Common myeloid progenitor, CD34-positive (primary cell): ENCODE measurements at regions of chr1 and their contacts with region 1.

Region 1: GRCh38 chr1:224513787-224514209 is 79.2 kb upstream of the WDR26 start:
- DNase-seq: peak; percentile 63 to 83 (median 79)
- H3K4me3 ChIP-seq: no peak overlapping the region
- H3K27ac ChIP-seq: no peak overlapping the region
- H3K4me1 ChIP-seq: peaks cover 0 to 18% (median 6%) of the 10 kb centered on the region in 4 experiments
- H3K27me3 ChIP-seq: no peaks in the 10 kb centered on the region

Region 2: DNA sequence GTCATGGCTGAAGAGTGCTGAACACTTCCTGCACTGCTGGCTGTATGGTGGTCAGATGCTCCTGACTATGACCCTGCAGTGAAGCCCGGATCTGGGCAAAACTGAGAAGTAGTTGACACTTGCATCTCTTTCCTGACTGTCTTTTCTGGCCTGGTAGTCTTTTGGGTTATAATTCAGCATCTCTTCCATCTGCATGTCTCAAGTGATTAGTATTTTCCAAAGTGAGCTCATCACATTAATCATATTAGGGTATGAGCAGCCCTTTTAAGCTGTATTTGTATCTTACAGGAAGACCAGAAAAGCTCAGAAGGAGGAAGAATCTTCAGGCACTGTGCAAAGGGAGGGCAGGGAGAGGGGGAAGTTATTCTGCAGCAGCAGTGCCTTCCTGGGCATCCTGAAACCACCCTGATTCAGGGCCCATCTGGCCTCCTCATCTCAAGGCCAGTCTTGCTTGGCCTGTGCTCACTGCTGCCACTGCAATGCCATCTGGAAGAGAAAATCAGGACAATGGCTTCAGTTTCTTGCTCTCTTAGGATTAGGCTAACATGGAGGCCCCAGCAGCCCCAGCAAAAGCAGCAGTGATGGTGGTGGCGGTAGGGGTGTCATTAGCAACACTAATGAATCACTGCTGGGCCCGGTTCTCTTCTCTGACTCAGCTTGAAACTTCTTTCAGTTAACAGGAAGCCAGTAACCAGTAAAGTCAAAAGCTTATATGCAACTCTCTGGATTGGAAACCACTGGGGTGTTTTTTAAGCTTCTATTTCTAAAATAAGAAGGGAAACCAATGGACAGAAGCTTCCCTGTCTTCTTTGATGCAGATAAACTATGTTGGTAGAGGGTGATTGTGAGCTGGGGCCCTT is 15.9 kb before region 1 on chr1:
- CTCF ChIA-PET with region 1: interaction called, 12 read pairs
- POLR2A ChIA-PET with region 1: no interaction called
- DNase-seq: peak; percentile 56 to 91 (median 87)
- H3K4me3 ChIP-seq: peak overlapping the region in 3 of 7 experiments; percentile 29 to 41 (median 29)
- H3K27ac ChIP-seq: peak overlapping the region in 1 of 2 experiments; percentile 43
- H3K4me1 ChIP-seq: peaks cover 4 to 50% (median 29%) of the 10 kb centered on the region in 4 experiments
- H3K27me3 ChIP-seq: no peaks in the 10 kb centered on the region

Region 3: DNA sequence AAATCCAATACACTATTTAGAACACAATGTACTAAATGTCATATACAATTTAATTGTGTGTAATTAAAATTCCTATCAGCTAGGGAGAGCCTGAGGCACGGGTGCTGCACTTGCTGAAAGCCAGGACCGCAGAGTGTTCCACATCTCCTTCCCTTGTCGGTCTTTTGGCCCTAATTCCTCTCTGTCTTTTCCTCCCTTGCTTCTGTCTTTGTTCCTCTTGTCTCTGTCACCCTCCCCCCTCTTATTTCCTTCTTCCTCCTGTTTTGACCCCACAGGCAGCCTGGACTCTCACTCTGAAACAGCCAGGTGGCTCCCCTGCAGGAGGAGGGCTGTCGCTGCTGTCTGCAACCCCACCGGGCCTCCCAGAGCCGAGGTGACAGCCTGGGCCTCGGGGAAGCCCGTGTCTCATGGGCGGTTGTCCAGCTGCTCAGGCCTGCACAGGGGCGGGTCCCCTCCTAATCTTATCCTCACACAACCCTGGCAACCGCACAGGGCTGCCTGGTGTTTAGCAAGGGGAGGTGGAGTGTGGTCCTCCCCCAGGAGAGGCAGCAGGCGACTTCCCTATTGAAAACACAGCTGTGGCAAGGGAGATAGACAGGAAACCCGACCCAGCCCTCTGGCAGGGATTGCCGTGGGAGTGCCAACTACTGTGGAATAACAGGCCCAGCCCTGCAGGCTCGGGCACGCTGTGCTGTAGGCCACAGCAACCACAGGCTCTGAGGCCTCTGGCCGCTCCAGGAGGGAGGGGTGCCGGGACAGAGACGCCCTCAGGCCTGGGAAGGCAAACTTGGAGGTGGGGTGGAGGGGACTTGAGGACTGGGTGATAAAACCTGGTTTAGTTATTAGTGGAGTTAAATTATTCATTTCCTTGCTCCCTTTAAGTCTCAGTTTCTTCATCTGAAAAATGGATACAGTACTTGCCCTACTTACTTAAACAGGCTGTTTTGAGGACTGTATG is 10.4 kb before region 1 on chr1:
- CTCF ChIA-PET with region 1: interaction called, 12 read pairs
- POLR2A ChIA-PET with region 1: no interaction called
- DNase-seq: peak; percentile 81 to 96 (median 93)
- H3K4me3 ChIP-seq: peak overlapping the region in 4 of 7 experiments; percentile 19 to 54 (median 33)
- H3K27ac ChIP-seq: peak overlapping the region in 1 of 2 experiments; percentile 62
- H3K4me1 ChIP-seq: peaks cover 3 to 61% (median 32%) of the 10 kb centered on the region in 4 experiments
- H3K27me3 ChIP-seq: no peaks in the 10 kb centered on the region

Region 4: DNA sequence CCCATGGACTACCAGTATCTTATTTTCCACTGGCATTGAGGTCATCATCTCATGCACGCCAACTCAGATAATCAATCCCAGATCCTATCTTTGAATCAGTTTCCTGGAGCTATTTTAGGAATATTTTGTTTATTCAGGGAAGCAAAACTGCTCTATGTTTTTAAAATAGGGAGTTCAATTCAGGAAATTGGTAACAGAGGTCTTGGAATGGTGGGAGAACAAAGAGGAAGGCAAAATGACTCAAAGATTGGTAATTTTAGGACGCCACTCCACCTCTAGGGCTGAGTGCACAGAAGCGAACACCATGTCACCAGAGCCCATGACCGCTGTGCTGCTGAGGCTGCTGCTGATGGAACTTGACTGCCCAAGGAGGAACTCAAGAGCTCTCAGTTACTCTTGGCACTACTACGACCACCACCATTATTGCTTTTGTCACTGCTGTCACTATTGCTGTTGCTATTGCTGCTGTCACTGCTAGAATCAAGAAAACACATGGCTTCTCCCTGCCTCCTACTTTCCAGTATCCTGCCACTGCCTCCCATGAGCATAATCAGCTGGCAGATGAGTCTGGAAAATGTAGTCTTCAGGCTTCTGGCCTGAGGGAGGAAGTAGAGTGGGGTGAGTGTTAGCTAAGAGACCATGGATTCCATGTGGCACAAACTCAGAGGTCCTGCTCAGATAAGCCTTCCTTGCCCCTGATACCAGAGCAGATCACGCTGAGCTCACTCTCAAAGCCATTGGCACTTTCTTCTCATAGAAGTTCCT is 30.7 kb after region 1 on chr1:
- CTCF ChIA-PET with region 1: interaction called, 10 read pairs
- POLR2A ChIA-PET with region 1: no interaction called
- DNase-seq: no peak
- H3K4me3 ChIP-seq: no peak overlapping the region
- H3K27ac ChIP-seq: no peak overlapping the region
- H3K4me1 ChIP-seq: peaks cover 7 to 28% (median 25%) of the 10 kb centered on the region in 4 experiments
- H3K27me3 ChIP-seq: no peaks in the 10 kb centered on the region

Region 5: DNA sequence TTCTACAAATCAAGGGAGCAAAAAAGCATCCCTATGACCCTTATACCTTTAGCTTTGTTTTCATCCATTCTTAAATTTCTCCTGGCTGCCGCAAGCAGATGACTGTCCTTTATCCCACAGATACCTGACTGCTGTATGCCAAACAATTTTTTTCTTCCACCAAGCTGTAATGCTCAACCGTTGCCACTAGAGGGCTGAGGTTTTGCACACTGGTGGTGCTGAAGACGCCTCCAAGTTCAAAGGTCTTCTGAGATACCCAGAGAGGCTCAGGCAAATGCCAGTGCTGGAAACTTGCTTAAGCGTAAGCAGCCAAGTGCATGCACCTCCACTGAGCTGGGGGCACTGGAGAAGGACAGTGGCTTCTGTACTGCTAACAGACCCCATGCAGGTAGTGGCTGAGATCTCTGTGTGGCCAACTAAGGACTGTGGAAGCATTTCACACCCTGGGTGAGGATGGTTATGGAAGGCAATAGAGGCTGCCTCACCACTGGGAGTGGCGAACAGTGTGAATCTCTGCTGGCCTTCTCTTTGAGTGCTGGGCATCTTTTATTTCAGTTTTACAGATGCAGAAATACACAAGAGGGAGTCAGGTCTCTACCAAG is 130.9 kb after region 1 on chr1:
- CTCF ChIA-PET with region 1: interaction called, 17 read pairs
- POLR2A ChIA-PET with region 1: no interaction called
- DNase-seq: peak; percentile 48 to 71 (median 58)
- H3K4me3 ChIP-seq: no peak overlapping the region
- H3K27ac ChIP-seq: no peak overlapping the region
- H3K4me1 ChIP-seq: no peaks in the 10 kb centered on the region
- H3K27me3 ChIP-seq: peaks cover 0 to 4% (median 0%) of the 10 kb centered on the region in 5 experiments

Region 6: DNA sequence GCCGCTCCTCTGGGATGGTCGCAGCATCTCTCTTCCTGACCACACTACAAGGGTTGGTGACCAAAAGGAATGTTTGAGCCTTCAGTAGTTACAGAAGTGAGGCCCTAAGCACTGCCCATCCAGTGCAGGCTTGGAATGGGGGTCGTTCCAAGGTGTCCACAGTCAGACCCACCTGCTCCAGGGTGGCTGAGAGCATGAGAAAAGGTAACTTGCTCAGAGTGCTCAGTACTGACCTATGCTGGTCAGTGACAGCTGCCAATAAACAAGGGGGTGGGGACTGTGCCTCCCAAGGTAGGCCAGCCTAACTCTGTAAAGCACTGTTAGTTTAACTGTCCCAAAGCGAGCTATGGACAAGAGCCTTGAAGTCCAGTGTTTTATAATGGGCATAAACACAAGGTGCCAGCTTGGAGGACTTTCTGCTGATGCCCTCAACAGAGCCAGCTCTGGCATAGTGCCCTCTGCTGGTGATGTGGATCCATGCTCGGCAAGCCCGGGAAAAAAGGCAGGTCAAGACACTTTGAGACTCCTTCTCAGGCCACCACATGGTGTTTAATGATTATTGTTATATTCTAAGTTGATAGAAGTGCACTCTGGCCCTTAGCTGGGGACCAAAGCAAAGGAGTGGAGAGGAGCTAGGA is 337.5 kb after region 1 on chr1:
- CTCF ChIA-PET with region 1: interaction called, 143 read pairs
- POLR2A ChIA-PET with region 1: no interaction called
- DNase-seq: peak; percentile 40 to 59 (median 55)
- H3K4me3 ChIP-seq: no peak overlapping the region
- H3K27ac ChIP-seq: no peak overlapping the region
- H3K4me1 ChIP-seq: no peaks in the 10 kb centered on the region
- H3K27me3 ChIP-seq: peaks cover 0 to 6% (median 0%) of the 10 kb centered on the region in 5 experiments

Region 7: DNA sequence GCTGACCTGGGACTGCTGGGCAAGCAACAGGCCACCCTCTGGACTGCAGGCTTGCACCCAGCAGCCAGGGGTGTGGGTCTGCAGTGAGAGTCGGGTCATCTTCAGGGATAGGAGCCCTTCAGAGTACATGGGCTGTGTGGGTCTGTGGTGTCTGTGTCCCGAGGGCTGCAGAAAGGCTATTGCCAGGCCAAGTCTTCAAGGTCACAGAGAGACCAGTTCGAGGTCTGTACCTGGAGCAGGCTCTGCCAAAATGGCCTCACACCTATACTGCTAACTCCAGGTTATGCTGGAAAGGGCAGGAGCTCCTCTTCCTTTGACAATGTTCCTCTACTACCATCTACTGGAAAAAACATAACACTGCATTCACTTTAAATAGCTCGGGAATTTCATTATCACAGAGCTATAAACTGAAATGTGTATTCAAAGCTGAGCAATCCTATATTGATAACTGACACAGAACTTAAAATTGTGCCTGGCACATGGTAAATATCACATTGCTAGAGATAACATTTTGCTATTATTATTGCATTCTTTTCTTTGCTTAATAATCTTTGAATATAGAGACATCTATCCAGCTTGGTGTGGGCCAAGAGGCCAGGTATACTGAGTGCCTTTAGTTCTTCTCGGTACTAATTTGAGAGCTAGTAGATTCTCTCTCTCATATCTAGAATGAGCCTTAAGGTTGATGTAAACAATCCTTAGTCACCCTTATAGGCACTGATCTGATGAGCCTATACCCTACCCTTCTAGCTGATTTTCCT is 408.8 kb after region 1 on chr1:
- CTCF ChIA-PET with region 1: interaction called, 38 read pairs
- POLR2A ChIA-PET with region 1: no interaction called
- DNase-seq: peak; percentile 14 to 39 (median 29)
- H3K4me3 ChIP-seq: no peak overlapping the region
- H3K27ac ChIP-seq: no peak overlapping the region
- H3K4me1 ChIP-seq: no peaks in the 10 kb centered on the region
- H3K27me3 ChIP-seq: no peaks in the 10 kb centered on the region